Activated CD8-positive, alpha-beta T cell treated with anti-CD3 and anti-CD28 coated beads for 36 hours (primary cell): ENCODE measurements at regions of chr5 and their contacts with region 1.

Region 1: DNA sequence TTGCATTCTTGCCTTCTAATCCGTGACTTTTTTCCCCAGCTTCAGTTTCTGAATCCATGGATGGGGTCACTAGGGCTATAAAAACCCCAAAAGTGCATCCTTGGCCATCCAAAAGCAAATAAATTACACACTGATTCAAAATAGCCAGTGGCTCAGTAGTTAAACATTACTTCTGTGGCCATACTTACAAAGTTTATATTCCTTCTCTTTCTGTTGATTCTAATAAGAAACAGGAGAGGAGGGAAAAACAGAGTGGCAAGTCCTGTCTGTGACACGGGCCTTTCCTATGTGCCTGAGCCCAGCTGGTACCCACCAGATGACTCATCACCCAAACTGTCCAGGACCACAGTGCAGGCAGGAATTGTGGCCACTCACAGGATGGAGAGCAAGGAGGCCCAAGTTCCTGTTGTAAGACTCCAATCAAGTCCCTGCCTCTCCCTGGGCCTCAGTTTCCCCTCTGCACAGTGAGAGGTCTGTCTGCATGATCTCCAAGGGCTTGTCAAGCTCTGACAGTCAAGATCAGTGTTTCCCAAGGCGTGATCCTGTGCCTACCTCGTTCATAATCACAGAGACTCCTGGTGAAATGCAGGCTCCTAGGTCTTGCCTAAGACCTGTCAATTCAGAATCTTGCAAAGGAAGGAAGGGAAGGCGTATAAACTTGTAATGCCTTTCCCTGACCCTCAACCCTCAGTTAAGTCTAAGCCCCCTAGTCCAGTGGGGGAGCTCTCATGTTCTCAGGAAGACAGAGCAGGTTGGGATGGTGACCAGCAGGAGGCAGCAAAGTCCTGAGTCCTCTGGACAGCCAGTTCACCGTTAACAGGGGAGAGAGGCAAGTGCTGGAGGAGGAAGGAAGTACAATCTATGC is 29.5 kb downstream of the TNIP1 start:
- DNase-seq: peak; percentile 88
- ATAC-seq: peak; percentile 83
- H3K4me3 Mint-ChIP-seq: no peak overlapping the region
- H3K27ac Mint-ChIP-seq: peak overlapping the region; percentile 36
- H3K4me1 Mint-ChIP-seq: peaks cover 12% of the 10 kb centered on the region
- H3K27me3 Mint-ChIP-seq: no peaks in the 10 kb centered on the region
- CTCF ChIP-seq: peak; percentile 75

Region 2: GRCh38 chr5:150904479-150905318 is 146.6 kb before region 1 on chr5 and contains the start of gene ZNF300:
- CTCF ChIA-PET with region 1: no interaction called
- POLR2A ChIA-PET with region 1: no interaction called
- intact Hi-C with region 1: no loop called
- DNase-seq: peak; percentile 59
- ATAC-seq: peak; percentile 85
- H3K4me3 Mint-ChIP-seq: peak within 1 kb of the TSS; percentile 75
- H3K27ac Mint-ChIP-seq: peak within 1 kb of the TSS; percentile 83
- H3K4me1 Mint-ChIP-seq: peaks cover 4% of the 10 kb centered on the region
- H3K27me3 Mint-ChIP-seq: peaks cover 18% of the 10 kb centered on the region
- CTCF ChIP-seq: no peak
- total RNA-seq, gene ZNF300: 1.1 to 1.2 TPM

Region 3: DNA sequence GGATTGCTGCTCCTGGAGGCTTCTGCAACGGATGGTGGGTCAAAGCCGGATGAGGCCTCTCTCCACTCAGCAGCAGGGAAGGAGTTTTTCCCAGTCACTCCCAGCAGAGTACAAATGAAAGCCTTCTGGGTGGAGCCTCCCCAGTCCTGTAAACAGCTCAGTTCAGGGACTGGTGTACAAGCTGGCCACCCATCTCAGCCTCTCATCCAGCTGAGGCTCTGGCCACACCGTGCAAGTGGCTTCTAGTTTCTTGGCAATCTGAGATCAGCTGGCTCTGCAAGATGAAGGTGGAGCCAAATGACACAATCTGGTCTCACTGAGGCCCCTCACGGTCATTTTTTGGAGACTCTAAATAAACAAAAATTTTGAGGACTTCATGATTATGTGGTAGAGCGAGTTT is 20.9 kb before region 1 on chr5:
- CTCF ChIA-PET with region 1: no interaction called
- POLR2A ChIA-PET with region 1: no interaction called
- intact Hi-C with region 1: no loop called
- DNase-seq: no peak
- ATAC-seq: no peak
- H3K4me3 Mint-ChIP-seq: no peak overlapping the region
- H3K27ac Mint-ChIP-seq: no peak overlapping the region
- H3K4me1 Mint-ChIP-seq: no peaks in the 10 kb centered on the region
- H3K27me3 Mint-ChIP-seq: no peaks in the 10 kb centered on the region
- CTCF ChIP-seq: no peak

Region 4: GRCh38 chr5:151063142-151063949 is 12.0 kb after region 1 on chr5:
- CTCF ChIA-PET with region 1: interaction called, 24 read pairs
- POLR2A ChIA-PET with region 1: interaction called, 5 read pairs
- intact Hi-C with region 1: no loop called
- DNase-seq: no peak
- ATAC-seq: no peak
- H3K4me3 Mint-ChIP-seq: no peak overlapping the region
- H3K27ac Mint-ChIP-seq: peak overlapping the region; percentile 80
- H3K4me1 Mint-ChIP-seq: peaks cover 94% of the 10 kb centered on the region
- H3K27me3 Mint-ChIP-seq: no peaks in the 10 kb centered on the region
- CTCF ChIP-seq: no peak

Region 5: GRCh38 chr5:151075698-151076331 is 24.5 kb after region 1 on chr5:
- CTCF ChIA-PET with region 1: interaction called, 23 read pairs
- POLR2A ChIA-PET with region 1: interaction called, 3 read pairs
- intact Hi-C with region 1: no loop called
- DNase-seq: no peak
- ATAC-seq: no peak
- H3K4me3 Mint-ChIP-seq: peak overlapping the region; percentile 15
- H3K27ac Mint-ChIP-seq: peak overlapping the region; percentile 65
- H3K4me1 Mint-ChIP-seq: peaks cover 78% of the 10 kb centered on the region
- H3K27me3 Mint-ChIP-seq: no peaks in the 10 kb centered on the region
- CTCF ChIP-seq: no peak

Region 6: GRCh38 chr5:151086905-151087360 is 35.6 kb after region 1 on chr5:
- CTCF ChIA-PET with region 1: interaction called, 23 read pairs
- POLR2A ChIA-PET with region 1: interaction called, 3 read pairs
- intact Hi-C with region 1: no loop called
- DNase-seq: peak; percentile 86
- ATAC-seq: peak; percentile 89
- H3K4me3 Mint-ChIP-seq: peak overlapping the region; percentile 79
- H3K27ac Mint-ChIP-seq: peak overlapping the region; percentile 70
- H3K4me1 Mint-ChIP-seq: peaks cover 66% of the 10 kb centered on the region
- H3K27me3 Mint-ChIP-seq: peaks cover 4% of the 10 kb centered on the region
- CTCF ChIP-seq: no peak